Left cardiac atrium (tissue), 4 donors: ENCODE measurements at regions of chr11 and their contacts with region 1.

Region 1: GRCh38 chr11:9613118-9613829 is 39.8 kb downstream of the WEE1 start:
- DNase-seq: peak; percentile 93
- ATAC-seq: peak; percentile 91

Region 2: GRCh38 chr11:9095421-9095820 is 517.9 kb before region 1 on chr11:
- intact Hi-C with region 1: no loop called
- DNase-seq: no peak
- ATAC-seq: no peak

Region 3: DNA sequence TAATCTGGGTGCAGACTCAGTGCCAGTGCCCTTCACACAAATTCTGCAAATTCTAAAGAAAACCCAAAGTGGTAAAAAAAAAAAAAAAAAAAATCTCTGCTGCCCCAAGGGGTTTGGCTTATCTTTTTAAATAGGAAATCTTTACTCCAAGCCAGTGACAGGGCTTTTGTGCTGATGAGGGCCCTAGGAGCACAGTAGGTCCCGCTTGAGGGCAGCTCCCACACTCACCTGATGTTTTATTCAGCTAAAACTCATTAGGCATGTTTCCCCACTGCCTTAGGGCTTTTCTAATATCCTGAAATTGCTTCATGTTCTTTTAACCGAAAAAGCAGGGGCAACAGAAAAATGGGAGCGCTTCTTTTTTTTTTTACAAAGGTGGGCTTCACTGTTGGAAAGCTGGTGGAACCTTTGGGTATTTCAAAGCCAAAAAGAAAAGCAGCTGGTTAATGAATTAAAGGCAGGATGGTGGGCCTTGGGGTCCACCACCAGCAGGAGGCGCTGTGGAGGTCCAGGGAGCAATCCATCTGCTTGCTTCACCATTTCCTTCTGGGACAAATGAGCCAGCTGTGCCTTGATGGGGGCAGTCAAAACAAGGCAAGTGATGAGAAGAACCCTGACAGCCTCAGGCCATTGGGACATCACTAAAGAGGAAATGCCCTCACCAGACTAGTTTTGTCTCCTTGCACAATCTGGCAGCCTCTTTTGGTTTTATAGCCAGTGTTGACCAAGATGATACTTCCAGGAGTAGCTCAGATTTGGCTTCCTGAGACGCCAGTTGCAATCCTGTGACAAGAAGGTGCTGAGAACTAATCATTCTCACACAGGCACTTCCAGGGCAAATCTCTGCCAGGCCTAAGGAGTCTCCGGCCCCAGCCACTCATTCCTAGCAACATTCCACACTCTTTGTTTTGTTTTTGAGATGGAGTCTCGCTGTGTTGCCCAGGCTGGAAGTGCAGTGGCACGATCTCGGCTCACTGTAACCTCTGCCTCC is 78.2 kb before region 1 on chr11:
- intact Hi-C with region 1: loop called in 1 of 2 experiments (anchors 2 kb)
- DNase-seq: peak; percentile 86
- ATAC-seq: peak; percentile 75 to 79

Region 4: GRCh38 chr11:9726321-9727022 is 113.2 kb after region 1 on chr11:
- intact Hi-C with region 1: no loop called
- DNase-seq: no peak
- ATAC-seq: no peak

Region 5: GRCh38 chr11:9748361-9748970 is 135.2 kb after region 1 on chr11:
- intact Hi-C with region 1: loop called (anchors 5 to 10 kb)
- DNase-seq: peak; percentile 57
- ATAC-seq: peak; percentile 81 to 92

Region 6: GRCh38 chr11:10307442-10308207 is 694.4 kb after region 1 on chr11:
- intact Hi-C with region 1: loop called in 1 of 2 experiments (anchors 10 kb)
- DNase-seq: peak; percentile 86
- ATAC-seq: peak; percentile 60 to 68